B cell (primary cell): ENCODE measurements at regions of chr2 and their contacts with region 1.

Region 1: GRCh38 chr2:157327621-157328500 is 2.2 kb upstream of the ERMN start:
- DNase-seq: peak; percentile 88
- ATAC-seq: peak; percentile 98
- H3K4me3 ChIP-seq: peak overlapping the region in 1 of 5 experiments; percentile 2
- H3K4me3 Mint-ChIP-seq: peak overlapping the region; percentile 71
- H3K27ac ChIP-seq: no peak overlapping the region
- H3K27ac Mint-ChIP-seq: peak overlapping the region; percentile 60
- H3K4me1 ChIP-seq: peaks cover 9 to 10% of the 10 kb centered on the region in 2 donors
- H3K4me1 Mint-ChIP-seq: peaks cover 14% of the 10 kb centered on the region
- H3K27me3 ChIP-seq: no peaks in the 10 kb centered on the region
- H3K27me3 Mint-ChIP-seq: no peaks in the 10 kb centered on the region
- CTCF ChIP-seq: peak; percentile 97

Region 2: DNA sequence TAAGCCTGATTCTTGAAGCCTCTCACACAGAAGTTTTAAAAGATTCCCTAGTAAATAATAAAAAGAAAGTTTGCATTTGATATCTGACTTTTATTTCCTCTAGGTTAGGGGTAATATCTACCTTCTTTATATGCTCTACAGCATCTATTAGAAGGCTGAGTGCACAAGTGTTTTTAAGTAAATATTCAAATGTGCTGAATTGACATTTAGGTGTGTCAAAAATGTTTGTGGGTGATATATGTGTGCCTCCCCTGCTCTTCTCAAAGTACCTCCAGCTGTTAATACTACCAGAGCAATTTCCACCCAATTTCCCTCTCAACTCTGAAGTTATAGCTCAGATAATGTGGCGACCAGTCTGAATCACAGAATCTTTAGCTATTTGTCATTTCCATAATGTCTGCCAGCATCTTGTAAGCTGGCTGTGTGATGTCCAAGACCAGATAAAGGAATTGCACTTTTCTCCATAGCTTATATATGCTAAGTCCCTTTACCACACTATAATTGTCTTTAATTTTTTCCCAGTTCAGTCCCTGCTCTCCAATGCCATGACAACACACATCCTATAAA is 22.2 kb after region 1 on chr2:
- CTCF ChIA-PET with region 1: interaction called, 13 read pairs
- POLR2A ChIA-PET with region 1: no interaction called
- intact Hi-C with region 1: no loop called
- DNase-seq: no peak
- ATAC-seq: no peak
- H3K4me3 ChIP-seq: no peak overlapping the region
- H3K4me3 Mint-ChIP-seq: no peak overlapping the region
- H3K27ac ChIP-seq: no peak overlapping the region
- H3K27ac Mint-ChIP-seq: no peak overlapping the region
- H3K4me1 ChIP-seq: no peaks in the 10 kb centered on the region
- H3K4me1 Mint-ChIP-seq: no peaks in the 10 kb centered on the region
- H3K27me3 ChIP-seq: no peaks in the 10 kb centered on the region
- H3K27me3 Mint-ChIP-seq: no peaks in the 10 kb centered on the region
- CTCF ChIP-seq: no peak

Region 3: GRCh38 chr2:157420771-157421323 is 93.0 kb after region 1 on chr2:
- CTCF ChIA-PET with region 1: interaction called, 56 read pairs
- POLR2A ChIA-PET with region 1: no interaction called
- intact Hi-C with region 1: loop called (anchors 2 kb)
- DNase-seq: peak; percentile 77
- ATAC-seq: peak; percentile 71
- H3K4me3 ChIP-seq: no peak overlapping the region
- H3K4me3 Mint-ChIP-seq: peak overlapping the region; percentile 78
- H3K27ac ChIP-seq: peak overlapping the region; percentile 58 to 88
- H3K27ac Mint-ChIP-seq: peak overlapping the region; percentile 94
- H3K4me1 ChIP-seq: peaks cover 49 to 52% of the 10 kb centered on the region in 2 donors
- H3K4me1 Mint-ChIP-seq: peaks cover 57% of the 10 kb centered on the region
- H3K27me3 ChIP-seq: no peaks in the 10 kb centered on the region
- H3K27me3 Mint-ChIP-seq: no peaks in the 10 kb centered on the region
- CTCF ChIP-seq: no peak

Region 4: GRCh38 chr2:157468931-157469708 is 141.3 kb after region 1 on chr2:
- CTCF ChIA-PET with region 1: interaction called, 19 read pairs
- POLR2A ChIA-PET with region 1: no interaction called
- intact Hi-C with region 1: loop called (anchors 1 kb)
- DNase-seq: peak; percentile 91
- ATAC-seq: peak; percentile 80
- H3K4me3 ChIP-seq: peak overlapping the region; percentile 38 to 89 (median 55)
- H3K4me3 Mint-ChIP-seq: peak overlapping the region; percentile 87
- H3K27ac ChIP-seq: peak overlapping the region; percentile 96 to 99
- H3K27ac Mint-ChIP-seq: peak overlapping the region; percentile 99
- H3K4me1 ChIP-seq: peaks cover 61 to 68% of the 10 kb centered on the region in 2 donors
- H3K4me1 Mint-ChIP-seq: peaks cover 76% of the 10 kb centered on the region
- H3K27me3 ChIP-seq: no peaks in the 10 kb centered on the region
- H3K27me3 Mint-ChIP-seq: no peaks in the 10 kb centered on the region
- CTCF ChIP-seq: no peak

Region 5: GRCh38 chr2:157497638-157498314 is 169.9 kb after region 1 on chr2:
- CTCF ChIA-PET with region 1: interaction called, 157 read pairs
- POLR2A ChIA-PET with region 1: no interaction called
- intact Hi-C with region 1: loop called (anchors 1 kb)
- DNase-seq: peak; percentile 58
- ATAC-seq: peak; percentile 71
- H3K4me3 ChIP-seq: no peak overlapping the region
- H3K4me3 Mint-ChIP-seq: no peak overlapping the region
- H3K27ac ChIP-seq: no peak overlapping the region
- H3K27ac Mint-ChIP-seq: no peak overlapping the region
- H3K4me1 ChIP-seq: peaks cover 23 to 27% of the 10 kb centered on the region in 2 donors
- H3K4me1 Mint-ChIP-seq: peaks cover 41% of the 10 kb centered on the region
- H3K27me3 ChIP-seq: no peaks in the 10 kb centered on the region
- H3K27me3 Mint-ChIP-seq: no peaks in the 10 kb centered on the region
- CTCF ChIP-seq: peak; percentile 88

Region 6: DNA sequence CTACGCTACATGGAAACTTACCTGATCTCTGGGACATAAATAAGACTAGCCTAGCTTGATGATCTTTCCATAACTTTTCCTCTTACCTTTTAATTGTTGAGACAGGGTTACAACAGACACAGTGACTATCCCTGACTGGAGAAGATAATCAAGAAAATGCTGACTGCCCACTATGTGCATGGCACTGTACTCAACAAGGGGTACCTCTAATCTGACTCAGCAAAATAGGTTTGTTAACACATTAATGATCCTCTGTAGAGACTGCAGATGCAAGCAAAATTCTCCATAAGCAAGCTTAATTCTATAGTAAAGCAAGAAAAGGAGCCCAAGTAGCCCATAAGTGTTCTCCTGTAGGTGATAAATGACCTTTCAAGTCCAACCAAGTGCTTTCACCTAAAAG is 275.3 kb after region 1 on chr2:
- CTCF ChIA-PET with region 1: interaction called, 97 read pairs
- POLR2A ChIA-PET with region 1: no interaction called
- intact Hi-C with region 1: no loop called
- DNase-seq: no peak
- ATAC-seq: no peak
- H3K4me3 ChIP-seq: no peak overlapping the region
- H3K4me3 Mint-ChIP-seq: no peak overlapping the region
- H3K27ac ChIP-seq: no peak overlapping the region
- H3K27ac Mint-ChIP-seq: no peak overlapping the region
- H3K4me1 ChIP-seq: no peaks in the 10 kb centered on the region
- H3K4me1 Mint-ChIP-seq: no peaks in the 10 kb centered on the region
- H3K27me3 ChIP-seq: no peaks in the 10 kb centered on the region
- H3K27me3 Mint-ChIP-seq: peaks cover 14% of the 10 kb centered on the region
- CTCF ChIP-seq: no peak